Panc1 (cell line): ENCODE measurements at regions of chr12 and their contacts with region 1.

Region 1: DNA sequence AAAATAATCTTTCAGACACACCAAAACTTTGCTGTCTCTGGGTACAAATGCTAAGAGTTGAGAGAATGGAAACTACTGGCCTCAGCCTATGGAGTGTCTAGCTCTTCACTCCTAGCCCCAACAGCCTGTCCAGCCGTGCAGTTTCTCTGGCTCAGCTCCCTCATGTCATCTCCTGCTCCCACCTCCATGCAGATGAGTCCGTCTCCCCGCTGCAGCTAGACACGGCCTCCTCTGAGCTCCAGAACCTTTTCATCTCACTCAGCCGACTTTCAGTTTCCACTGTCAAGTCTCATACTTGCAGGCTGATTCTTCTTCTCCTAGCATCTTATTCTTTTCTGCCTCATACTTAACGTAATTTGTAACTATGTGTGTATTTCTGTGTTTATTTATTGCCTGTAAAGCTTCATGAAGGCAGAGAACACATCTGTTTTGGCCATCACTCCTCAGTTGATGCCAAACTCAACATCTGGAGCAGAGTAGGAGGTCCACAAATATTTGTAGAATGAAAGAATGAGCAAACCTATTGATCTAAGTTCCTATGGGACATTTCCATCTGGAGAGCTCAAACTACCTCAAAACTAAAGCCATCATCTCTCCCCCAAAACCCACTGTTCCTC is 139.8 kb upstream of the PWP1 start:
- DNase-seq: no peak
- ATAC-seq: no peak
- H3K4me3 ChIP-seq: no peak overlapping the region
- H3K27ac ChIP-seq: no peak overlapping the region
- H3K4me1 ChIP-seq: no peaks in the 10 kb centered on the region
- H3K27me3 ChIP-seq: peaks cover 5% of the 10 kb centered on the region; the same call in 1 of the 2 replicates
- CTCF ChIP-seq: no peak

Region 2: DNA sequence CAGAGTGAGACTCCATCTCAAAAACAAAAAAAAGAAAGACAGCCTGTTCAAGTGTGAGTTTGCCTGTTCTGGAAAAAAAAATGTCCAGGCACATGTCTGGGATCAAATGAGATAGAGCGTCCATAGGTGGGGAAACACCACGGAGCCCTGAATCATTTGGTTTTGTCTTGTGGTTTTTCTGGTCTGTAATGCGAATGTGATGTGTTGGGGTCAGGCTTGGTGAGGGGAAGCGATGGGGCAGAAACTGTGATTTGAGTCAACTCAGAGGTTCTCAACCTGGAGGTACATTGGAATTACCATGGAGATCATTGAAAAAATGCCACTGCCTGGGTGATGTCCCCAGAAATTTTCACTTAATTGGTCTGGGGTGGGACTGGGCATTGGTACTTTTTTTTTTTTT is 44.2 kb before region 1 on chr12:
- CTCF ChIA-PET with region 1: no interaction called
- POLR2A ChIA-PET with region 1: no interaction called
- in situ Hi-C with region 1: no loop called
- intact Hi-C with region 1: no loop called
- DNase-seq: no peak
- ATAC-seq: no peak
- H3K4me3 ChIP-seq: no peak overlapping the region
- H3K27ac ChIP-seq: no peak overlapping the region
- H3K4me1 ChIP-seq: no peaks in the 10 kb centered on the region
- H3K27me3 ChIP-seq: no peaks in the 10 kb centered on the region
- CTCF ChIP-seq: no peak

Region 3: DNA sequence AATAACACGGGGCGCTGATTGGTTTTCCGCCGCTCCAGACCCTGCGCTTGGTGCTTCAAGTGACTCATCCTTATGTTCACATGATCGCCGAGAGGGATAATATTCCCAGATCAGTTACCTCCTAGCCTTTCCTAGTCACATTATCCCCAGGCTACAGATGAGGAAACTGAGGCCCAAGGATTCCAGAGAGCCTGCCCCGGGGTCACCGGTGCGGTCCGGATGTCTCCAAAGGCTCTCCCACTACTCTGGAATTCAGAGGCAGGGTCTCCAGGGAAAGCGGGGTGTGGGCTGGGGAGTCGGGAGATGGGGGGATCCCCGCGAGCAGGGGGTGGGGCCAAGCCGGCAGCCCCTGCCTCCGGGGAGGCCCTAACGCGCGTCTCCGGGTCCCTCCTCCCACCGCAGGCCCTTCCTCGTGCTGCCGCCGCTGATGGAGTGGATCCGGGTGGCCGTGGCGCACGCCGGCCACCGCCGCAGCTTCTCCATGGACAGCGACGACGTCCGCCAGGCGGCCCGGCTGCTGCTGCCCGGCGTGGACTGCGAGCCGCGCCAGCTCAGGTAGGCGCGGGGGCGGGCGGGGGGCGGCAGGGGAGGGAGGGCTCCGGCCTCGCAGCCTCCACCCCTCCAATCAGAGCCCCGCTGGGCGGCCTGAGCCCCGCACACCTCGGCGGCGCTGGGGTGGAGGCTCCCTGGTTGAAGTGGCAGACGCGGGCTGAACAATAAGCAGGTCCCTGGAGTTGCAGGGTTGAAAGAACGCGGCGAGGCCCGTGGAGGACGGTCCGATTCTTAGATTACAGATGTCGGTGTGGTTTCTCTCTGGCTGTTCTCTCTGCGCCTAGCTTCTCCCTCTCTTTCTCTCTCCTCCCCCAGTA is 35.1 kb after region 1 on chr12:
- CTCF ChIA-PET with region 1: no interaction called
- POLR2A ChIA-PET with region 1: interaction called, 10 read pairs
- in situ Hi-C with region 1: no loop called
- intact Hi-C with region 1: no loop called
- DNase-seq: no peak
- ATAC-seq: peak; percentile 74
- H3K4me3 ChIP-seq: no peak overlapping the region
- H3K27ac ChIP-seq: no peak overlapping the region
- H3K4me1 ChIP-seq: no peaks in the 10 kb centered on the region
- H3K27me3 ChIP-seq: peaks cover 18% of the 10 kb centered on the region; the same call in 1 of the 2 replicates
- CTCF ChIP-seq: no peak